SK-N-SH (cell line): ENCODE measurements at regions of chr1 and their contacts with region 1.

Region 1: DNA sequence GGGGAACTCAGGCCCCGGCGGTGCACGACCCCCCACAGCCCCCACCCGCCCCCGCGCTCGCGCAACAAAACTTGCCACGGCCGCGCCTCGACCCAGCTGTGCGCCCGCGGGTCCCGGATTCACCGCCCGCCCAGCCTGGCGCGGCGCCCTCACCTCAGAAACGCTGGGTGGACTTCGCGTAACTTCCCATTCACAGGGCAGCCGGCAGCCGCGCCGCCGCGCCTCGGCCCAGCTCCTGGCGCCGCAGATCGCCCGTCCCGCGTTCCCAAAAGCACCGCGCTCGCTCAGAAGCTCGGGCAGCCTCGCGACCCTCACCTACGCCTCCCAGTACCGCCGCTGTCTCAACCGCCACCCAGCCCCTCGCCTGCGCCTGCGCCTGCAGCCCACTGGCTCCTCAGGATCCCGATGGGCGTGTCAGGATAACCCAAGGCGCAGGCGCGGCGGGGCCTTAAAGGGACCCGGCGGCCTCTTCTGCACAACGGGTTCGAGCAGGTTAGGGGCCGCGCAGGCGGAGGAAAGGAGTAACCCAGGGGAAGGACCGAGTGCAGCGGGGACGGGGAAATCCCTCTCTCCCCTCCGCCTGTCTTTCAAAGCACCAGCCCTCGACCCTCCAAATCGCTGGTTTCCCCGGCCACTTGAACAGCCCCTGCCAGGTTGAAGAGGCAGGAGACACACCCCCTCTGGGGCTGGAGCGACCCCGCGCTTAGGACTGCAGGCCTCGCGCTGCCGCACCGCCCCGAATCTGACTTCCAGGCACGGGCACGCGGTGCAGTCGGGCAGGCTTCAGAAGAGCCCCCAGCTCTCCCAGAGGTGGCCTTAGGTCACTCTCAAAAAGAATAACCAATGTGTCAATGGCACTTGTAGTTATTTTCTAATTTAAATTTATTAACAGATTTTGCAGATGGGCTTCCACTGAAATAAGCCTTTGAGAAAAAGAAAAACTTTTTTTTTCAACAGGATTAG is at the start of gene NBPF1:
- DNase-seq: peak; percentile 100
- H3K4me3 ChIP-seq: peak within 1 kb of the TSS; percentile 64 to 100
- H3K27ac ChIP-seq: peak within 1 kb of the TSS; percentile 65 to 93
- H3K4me1 ChIP-seq: peaks cover 13 to 17% of the 10 kb centered on the region in 2 experiments; a peak in 3 of 4 replicates
- H3K27me3 ChIP-seq: no peaks in the 10 kb centered on the region
- CTCF ChIP-seq: 0 out of 2 replicates have a peak, but pooled peaks have one; percentile 5
- EP300 ChIP-seq: peak in 1 of 2 experiments; percentile 34; a peak in 1 of 4 replicates
- RAD21 ChIP-seq: 0 out of 2 replicates have a peak, but pooled peaks have one; percentile 13
- polyA plus RNA-seq, gene NBPF1: 29.8 and 39.7 TPM in 2 replicates

Region 2: GRCh38 chr1:15985611-15986297 is 627.7 kb before region 1 on chr1:
- CTCF ChIA-PET with region 1: no interaction called
- POLR2A ChIA-PET with region 1: no interaction called
- DNase-seq: no peak
- H3K4me3 ChIP-seq: no peak overlapping the region
- H3K27ac ChIP-seq: no peak overlapping the region
- H3K4me1 ChIP-seq: no peaks in the 10 kb centered on the region
- H3K27me3 ChIP-seq: no peaks in the 10 kb centered on the region
- CTCF ChIP-seq: no peak
- EP300 ChIP-seq: no peak
- RAD21 ChIP-seq: no peak

Region 3: DNA sequence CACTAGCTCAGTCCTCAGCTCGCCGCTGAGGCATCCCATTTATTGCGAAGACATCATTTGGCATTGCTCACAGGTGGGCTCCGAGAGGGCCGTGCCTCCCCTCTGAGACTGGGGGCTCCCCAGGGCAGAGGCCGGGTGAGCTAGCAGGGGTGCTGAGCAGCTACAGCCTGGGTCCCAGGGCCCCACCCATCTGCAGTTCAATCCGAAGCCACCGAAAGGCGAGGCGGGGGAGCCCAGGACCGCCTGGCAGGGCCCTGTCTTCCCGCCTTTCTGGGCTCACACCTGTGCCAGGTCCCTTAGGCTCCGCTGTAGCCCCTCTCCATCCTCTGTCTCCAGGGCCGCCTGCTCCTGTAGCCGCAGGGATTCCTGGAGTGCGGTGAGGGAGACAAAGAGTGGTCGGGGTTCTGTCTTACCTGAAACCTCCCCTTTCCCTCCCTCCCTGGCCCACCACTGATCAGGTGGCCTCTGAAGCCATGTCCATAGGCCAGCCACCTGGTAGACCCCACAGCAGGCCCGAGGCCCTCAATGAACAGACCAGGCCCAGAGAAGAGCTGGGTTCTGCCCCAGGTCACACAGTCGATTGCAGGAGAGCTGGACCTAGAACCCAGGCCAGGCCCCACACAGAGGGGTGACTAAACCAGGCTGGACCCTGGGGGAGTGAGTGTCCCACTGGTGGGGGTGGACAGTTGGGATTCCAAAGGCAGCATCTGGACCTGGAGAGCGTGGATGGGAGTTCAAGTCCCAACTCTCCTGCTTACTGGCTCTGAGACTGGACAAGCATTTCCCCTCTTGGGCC is 18.0 kb after region 1 on chr1:
- CTCF ChIA-PET with region 1: interaction called, 130 read pairs
- POLR2A ChIA-PET with region 1: no interaction called
- DNase-seq: peak; percentile 42
- H3K4me3 ChIP-seq: no peak overlapping the region
- H3K27ac ChIP-seq: no peak overlapping the region
- H3K4me1 ChIP-seq: no peaks in the 10 kb centered on the region
- H3K27me3 ChIP-seq: no peaks in the 10 kb centered on the region
- CTCF ChIP-seq: no peak
- EP300 ChIP-seq: no peak
- RAD21 ChIP-seq: no peak

Region 4: GRCh38 chr1:16727190-16728111 is 114.0 kb after region 1 on chr1:
- CTCF ChIA-PET with region 1: no interaction called
- POLR2A ChIA-PET with region 1: no interaction called
- DNase-seq: peak; percentile 29
- H3K4me3 ChIP-seq: no peak overlapping the region
- H3K27ac ChIP-seq: no peak overlapping the region
- H3K4me1 ChIP-seq: no peaks in the 10 kb centered on the region
- H3K27me3 ChIP-seq: peaks cover 14% of the 10 kb centered on the region
- CTCF ChIP-seq: no peak
- EP300 ChIP-seq: no peak
- RAD21 ChIP-seq: no peak

Region 5: DNA sequence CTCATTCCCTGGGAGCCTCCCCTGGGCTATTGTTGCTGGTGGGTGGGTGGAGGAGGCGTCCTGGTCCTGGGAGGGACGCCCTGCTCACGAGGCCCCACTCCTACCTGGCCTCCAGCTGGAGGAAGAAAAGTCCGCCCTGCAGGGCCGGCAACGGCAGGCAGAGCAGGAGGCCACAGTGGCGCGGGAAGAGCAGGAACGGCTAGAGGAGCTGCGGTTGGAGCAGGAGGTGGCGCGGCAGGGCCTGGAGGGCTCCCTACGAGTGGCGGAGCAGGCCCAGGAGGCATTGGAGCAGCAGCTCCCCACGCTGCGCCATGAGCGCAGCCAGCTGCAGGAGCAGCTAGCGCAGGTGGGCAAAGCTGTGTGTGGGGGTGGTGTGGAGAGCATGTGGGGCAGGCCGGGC is 333.2 kb after region 1 on chr1:
- CTCF ChIA-PET with region 1: interaction called, 11 read pairs
- POLR2A ChIA-PET with region 1: interaction called, 3 read pairs
- DNase-seq: no peak
- H3K4me3 ChIP-seq: no peak overlapping the region
- H3K27ac ChIP-seq: no peak overlapping the region
- H3K4me1 ChIP-seq: no peaks in the 10 kb centered on the region; a peak in 1 of 4 replicates
- H3K27me3 ChIP-seq: no peaks in the 10 kb centered on the region
- CTCF ChIP-seq: no peak
- EP300 ChIP-seq: no peak
- RAD21 ChIP-seq: no peak

Region 6: GRCh38 chr1:17502326-17502778 is 888.9 kb after region 1 on chr1:
- CTCF ChIA-PET with region 1: no interaction called
- POLR2A ChIA-PET with region 1: no interaction called
- DNase-seq: peak; percentile 85
- H3K4me3 ChIP-seq: no peak overlapping the region
- H3K27ac ChIP-seq: no peak overlapping the region
- H3K4me1 ChIP-seq: peaks cover 0 to 2% of the 10 kb centered on the region in 2 experiments; a peak in 1 of 4 replicates
- H3K27me3 ChIP-seq: peaks cover 8% of the 10 kb centered on the region
- CTCF ChIP-seq: peak; percentile 89
- EP300 ChIP-seq: no peak
- RAD21 ChIP-seq: peak; percentile 92